ENCODE measurements at regions of chr5 and their contacts with region 1.

Region 1: DNA sequence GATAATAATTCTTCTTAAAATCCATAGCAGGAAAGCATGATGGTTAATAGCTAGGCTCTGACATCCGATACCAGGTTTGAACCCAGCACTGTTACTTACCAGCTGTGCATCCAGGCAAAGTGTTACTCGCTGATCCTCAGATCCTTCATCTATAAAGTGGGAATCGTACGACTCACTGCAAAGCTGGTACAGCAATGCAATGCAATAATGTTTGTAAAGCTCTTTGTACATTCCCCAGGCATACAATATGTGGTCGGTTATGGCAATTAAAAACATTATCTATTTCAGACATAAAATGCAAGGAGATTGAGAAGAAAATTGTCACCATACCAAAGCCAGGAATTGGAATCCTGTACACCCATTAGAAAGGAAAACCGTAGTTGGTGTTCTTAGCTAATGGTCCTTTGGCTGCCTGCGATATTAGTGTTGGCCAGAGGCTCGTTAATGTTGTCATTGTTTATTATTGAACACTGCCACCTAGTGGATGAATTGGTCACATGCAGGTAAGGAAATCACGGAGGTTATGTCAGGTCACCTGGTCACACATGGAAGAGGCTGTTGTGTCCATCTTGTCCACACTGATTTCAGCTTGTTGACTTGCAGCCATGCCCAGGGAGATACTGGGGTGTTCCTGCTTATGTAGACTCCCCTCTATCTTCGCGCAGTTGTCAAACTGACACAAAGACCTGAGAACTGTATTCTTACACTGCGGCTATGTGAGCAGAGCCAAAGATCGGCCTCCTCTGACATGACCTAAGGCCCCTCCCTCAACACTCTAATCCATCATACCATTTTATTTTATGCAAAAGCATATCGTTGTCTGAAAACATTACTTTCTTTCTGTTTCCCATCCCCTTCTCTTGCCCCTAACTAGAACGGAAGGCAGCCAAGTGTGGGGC is 87.5 kb upstream of the PPP2R2B start:
- DNase-seq: peak; percentile 81

Region 2: GRCh38 chr5:146541958-146542849 is 423.8 kb before region 1 on chr5:
- in situ Hi-C with region 1: loop called (anchors 10 kb)
- DNase-seq: peak; percentile 78

Region 3: DNA sequence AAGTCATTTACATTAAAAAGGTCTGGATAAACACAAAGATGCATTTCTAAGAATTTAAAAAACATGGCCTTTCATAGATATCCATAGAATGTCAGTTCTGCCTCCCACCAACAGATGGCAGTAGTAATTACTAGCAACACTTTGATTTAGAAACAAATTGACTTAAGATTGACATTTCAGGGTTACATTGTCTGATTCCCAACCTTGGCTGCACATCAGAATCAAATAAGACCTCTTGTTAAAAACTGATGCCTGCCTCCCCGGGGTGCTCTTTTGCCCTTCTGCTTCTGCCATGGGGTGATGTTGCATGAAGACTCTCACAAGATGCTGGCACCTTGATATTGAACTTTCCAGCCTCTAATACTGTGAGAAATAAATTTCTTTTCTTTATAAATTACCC is 303.8 kb before region 1 on chr5:
- in situ Hi-C with region 1: loop called (anchors 25 kb)
- DNase-seq: peak; percentile 41